Activated CD4-positive, alpha-beta T cell treated with anti-CD3 and anti-CD28 coated beads, Interleukin-2, amount 10 ng/mL, durations not matched to agents 7 days and 5 days (primary cell): ENCODE measurements at regions of chr1 and their contacts with region 1.

Region 1: DNA sequence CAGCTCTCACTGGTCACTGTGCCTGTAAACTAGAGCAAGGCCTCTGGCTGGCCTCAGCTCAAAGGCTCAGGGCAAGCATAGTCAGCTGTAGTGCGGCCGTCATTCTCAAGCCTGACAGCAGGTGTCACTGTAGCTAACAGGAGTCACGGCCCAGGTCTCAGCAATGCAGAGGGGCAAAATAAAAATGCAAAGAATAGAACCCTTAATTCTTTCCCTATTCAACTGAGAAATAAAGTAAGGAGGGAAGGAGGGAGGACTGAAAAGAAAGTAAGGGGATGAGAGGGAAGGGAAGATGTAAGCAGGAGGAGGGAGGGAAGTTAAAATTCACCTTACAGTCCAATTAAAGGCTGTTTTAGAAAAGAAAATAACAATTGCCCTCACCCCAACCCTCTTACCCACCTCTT is 106.1 kb downstream of the KIAA0319L start:
- DNase-seq: peak; percentile 83
- H3K4me3 Mint-ChIP-seq: no peak overlapping the region
- H3K27ac Mint-ChIP-seq: peak overlapping the region; percentile 80
- H3K4me1 Mint-ChIP-seq: peaks cover 34% of the 10 kb centered on the region
- H3K27me3 Mint-ChIP-seq: no peaks in the 10 kb centered on the region

Region 2: GRCh38 chr1:35505908-35506798 is 55.0 kb after region 1 on chr1:
- CTCF ChIA-PET with region 1: interaction called, 13 read pairs
- POLR2A ChIA-PET with region 1: no interaction called
- DNase-seq: peak; percentile 78
- H3K4me3 Mint-ChIP-seq: peak overlapping the region; percentile 44
- H3K27ac Mint-ChIP-seq: peak overlapping the region; percentile 93
- H3K4me1 Mint-ChIP-seq: peaks cover 67% of the 10 kb centered on the region
- H3K27me3 Mint-ChIP-seq: no peaks in the 10 kb centered on the region

Region 3: DNA sequence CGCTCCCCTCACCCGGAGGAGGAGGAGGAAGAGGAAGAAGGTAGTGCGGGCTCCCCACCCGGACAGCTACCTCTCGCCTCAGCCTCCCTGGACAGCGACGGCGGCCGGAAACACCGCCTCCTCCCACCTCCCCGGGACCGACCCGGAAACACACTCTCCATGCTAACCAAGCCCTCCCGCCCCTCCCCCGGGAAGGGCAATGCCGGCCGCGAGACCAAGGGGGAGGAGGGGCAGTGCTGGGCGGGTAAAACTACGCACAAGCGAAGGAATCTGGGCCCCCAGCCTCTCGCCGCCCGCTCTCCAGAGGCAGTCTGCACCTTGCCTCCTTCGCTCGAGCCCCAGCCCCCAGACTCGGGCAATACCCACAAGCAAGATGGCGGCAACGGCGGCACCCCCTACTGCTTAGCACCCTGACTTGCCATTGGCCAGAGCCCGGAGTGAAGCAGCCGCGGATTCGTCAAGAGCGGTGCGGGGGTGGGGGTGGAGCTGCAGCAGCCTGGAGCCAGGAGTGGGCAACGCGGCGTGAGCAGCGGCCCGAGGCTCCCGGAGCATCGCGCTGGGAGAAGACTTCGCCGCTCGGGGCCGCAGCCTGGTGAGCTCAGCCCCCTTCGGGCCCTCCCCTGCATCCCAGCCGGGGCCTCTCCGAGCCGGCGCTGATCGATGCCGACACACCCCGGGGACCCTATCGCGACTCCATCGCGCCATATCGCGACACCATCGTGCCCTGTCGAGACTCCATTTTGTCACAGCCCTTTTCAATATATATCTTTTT is 106.4 kb after region 1 on chr1 and contains the starts of genes KIAA0319L and NCDN:
- CTCF ChIA-PET with region 1: interaction called, 13 read pairs
- POLR2A ChIA-PET with region 1: no interaction called
- DNase-seq: peak; percentile 97
- H3K4me3 Mint-ChIP-seq: peak within 1 kb of the TSS; percentile 97
- H3K27ac Mint-ChIP-seq: peak within 1 kb of the TSS; percentile 98
- H3K4me1 Mint-ChIP-seq: peaks cover 46% of the 10 kb centered on the region
- H3K27me3 Mint-ChIP-seq: no peaks in the 10 kb centered on the region
- total RNA-seq, gene KIAA0319L: 37.6 to 46.3 TPM
- total RNA-seq, gene NCDN: 19.4 to 21.4 TPM

Region 4: DNA sequence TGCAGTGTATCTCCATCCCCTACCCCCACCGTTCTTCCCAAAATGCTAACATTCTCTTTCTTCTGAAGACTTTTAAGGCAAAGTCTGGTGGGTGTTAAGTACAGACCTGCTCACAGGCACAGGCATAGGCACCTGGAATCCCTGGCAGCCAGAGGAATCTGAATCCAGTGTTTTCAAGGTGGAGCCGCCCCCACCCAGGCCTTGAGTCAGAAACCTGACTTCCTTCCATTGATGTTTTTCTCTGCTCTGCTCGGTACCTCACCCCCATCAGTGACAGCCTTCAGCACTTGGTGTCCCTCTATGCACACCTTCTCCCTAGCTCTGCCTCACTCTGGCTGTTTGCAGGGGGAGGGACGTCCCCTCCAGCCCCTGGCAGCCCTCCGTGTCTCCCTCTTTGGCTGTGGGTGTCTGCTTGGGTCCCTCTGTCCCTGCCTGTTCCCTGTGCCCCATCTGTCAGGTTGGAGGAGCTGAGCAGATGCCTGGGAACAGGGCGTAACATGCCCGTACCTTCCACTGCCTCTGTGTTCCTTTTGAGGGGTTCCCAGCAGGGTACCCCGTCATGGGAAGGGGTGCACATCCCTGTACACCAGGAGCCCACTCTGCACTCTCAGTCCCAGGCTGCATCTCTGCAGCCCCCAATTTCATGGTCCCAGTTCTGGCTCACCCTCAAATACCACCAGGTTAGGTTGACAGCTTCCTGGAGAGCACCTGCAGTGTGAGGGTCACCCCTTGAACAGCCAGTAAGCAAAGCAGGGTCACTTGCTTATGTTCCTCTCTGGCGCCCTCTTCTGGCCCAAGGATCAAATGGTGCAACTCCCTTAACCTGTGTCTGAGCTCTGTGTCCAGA is 113.1 kb after region 1 on chr1:
- CTCF ChIA-PET with region 1: interaction called, 26 read pairs
- POLR2A ChIA-PET with region 1: no interaction called
- DNase-seq: peak; percentile 89
- H3K4me3 Mint-ChIP-seq: no peak overlapping the region
- H3K27ac Mint-ChIP-seq: peak overlapping the region; percentile 33
- H3K4me1 Mint-ChIP-seq: peaks cover 27% of the 10 kb centered on the region
- H3K27me3 Mint-ChIP-seq: no peaks in the 10 kb centered on the region

Region 5: DNA sequence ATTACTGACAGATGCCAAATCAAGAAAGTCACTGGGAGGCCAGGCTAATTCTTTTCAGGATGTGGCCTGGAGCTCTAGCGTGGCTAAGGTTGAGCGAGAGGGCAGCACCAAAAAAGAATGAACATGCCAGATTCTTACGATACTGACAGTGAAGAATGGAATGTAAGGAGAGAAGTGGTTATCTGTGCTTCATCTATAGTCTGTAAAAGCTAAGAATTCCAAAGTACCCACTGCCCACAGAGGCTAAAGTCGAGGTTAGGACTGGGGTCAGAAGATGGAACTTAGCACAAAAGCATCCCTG is 154.7 kb after region 1 on chr1:
- CTCF ChIA-PET with region 1: no interaction called
- POLR2A ChIA-PET with region 1: no interaction called
- DNase-seq: no peak
- H3K4me3 Mint-ChIP-seq: no peak overlapping the region
- H3K27ac Mint-ChIP-seq: no peak overlapping the region
- H3K4me1 Mint-ChIP-seq: peaks cover 13% of the 10 kb centered on the region
- H3K27me3 Mint-ChIP-seq: no peaks in the 10 kb centered on the region